ENCODE measurements at regions of chr9 and their contacts with region 1.

Region 1: GRCh38 chr9:99112750-99113413 is 8.0 kb downstream of the TGFBR1 start:
- DNase-seq: peak; percentile 65
- ATAC-seq: peak; percentile 87
- H3K4me3 Mint-ChIP-seq: peak overlapping the region; percentile 35
- H3K27ac Mint-ChIP-seq: peak overlapping the region; percentile 47
- H3K4me1 Mint-ChIP-seq: peaks cover 91% of the 10 kb centered on the region
- H3K27me3 Mint-ChIP-seq: no peaks in the 10 kb centered on the region
- CTCF ChIP-seq: no peak

Region 2: GRCh38 chr9:98942906-98943681 is 169.8 kb before region 1 on chr9:
- CTCF ChIA-PET with region 1: no interaction called
- POLR2A ChIA-PET with region 1: no interaction called
- intact Hi-C with region 1: no loop called
- DNase-seq: no peak
- ATAC-seq: no peak
- H3K4me3 Mint-ChIP-seq: no peak overlapping the region
- H3K27ac Mint-ChIP-seq: no peak overlapping the region
- H3K4me1 Mint-ChIP-seq: peaks cover 11% of the 10 kb centered on the region
- H3K27me3 Mint-ChIP-seq: peaks cover 52% of the 10 kb centered on the region
- CTCF ChIP-seq: no peak

Region 3: DNA sequence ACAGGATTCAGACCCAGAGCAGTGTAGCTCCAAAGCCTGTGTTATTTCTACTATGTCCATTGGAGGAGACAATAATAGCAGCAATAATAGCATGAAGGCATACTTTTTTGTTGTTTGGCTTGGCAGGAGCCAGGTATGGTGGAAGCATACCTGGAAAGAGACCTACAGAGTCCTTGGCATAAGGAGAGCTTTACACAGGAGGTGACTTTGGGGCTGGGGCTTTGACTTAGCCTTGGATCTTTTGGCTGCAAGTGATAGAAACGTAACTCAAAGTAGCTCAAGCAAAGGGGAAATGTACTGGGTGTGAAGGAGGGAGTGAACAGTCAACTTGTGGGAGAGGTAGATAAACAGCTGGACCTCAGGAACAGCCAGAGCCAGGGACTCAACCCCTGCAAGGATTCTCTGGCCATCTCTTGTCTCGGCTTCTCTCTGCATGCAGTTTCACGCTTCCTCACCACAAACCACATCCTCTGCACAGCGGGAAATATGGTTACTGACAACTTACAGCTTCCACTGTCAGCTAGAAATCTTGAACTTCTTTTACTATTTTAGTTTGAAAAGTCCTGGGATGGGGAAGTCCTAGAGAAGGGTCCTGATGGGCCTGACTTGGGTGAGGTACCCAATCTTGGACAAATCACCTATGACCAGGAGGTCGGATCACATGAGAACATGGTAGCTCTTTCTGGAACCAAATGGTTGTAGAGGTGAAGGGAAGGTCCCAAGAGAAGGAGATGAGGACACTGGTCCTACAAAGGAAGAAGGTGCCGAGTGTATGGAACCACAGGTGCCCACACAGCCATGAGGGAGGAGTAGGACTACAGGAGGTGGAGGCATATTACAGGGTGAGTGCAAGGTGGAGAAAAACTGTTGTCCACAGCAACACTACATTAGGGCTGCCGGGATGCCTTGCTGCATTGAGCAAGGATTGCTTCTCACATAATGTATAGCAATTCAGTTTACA is 54.9 kb before region 1 on chr9:
- CTCF ChIA-PET with region 1: interaction called, 3 read pairs
- POLR2A ChIA-PET with region 1: no interaction called
- intact Hi-C with region 1: loop called (anchors 5 kb)
- DNase-seq: peak; percentile 94
- ATAC-seq: peak; percentile 43
- H3K4me3 Mint-ChIP-seq: peak overlapping the region; percentile 63
- H3K27ac Mint-ChIP-seq: peak overlapping the region; percentile 86
- H3K4me1 Mint-ChIP-seq: peaks cover 63% of the 10 kb centered on the region
- H3K27me3 Mint-ChIP-seq: peaks cover 4% of the 10 kb centered on the region
- CTCF ChIP-seq: no peak

Measured in activated CD8-positive, alpha-beta T cell treated with anti-CD3 and anti-CD28 coated beads for 36 hours (primary cell).